H1 (cell line): ENCODE measurements at regions of chr3 and their contacts with region 1.

Region 1: GRCh38 chr3:149536429-149536828 is 61.9 kb downstream of the TM4SF4 start:
- DNase-seq: peak in 1 of 2 experiments; percentile 63
- H3K4me3 ChIP-seq: peak overlapping the region in 1 of 4 experiments; percentile 21; a peak in 1 of 8 replicates
- H3K27ac ChIP-seq: no peak overlapping the region
- H3K4me1 ChIP-seq: peaks cover 2 to 10% (median 6%) of the 10 kb centered on the region in 4 experiments; a peak in 5 of 7 replicates
- H3K27me3 ChIP-seq: no peaks in the 10 kb centered on the region
- CTCF ChIP-seq: no peak
- EP300 ChIP-seq: no peak
- POLR2A ChIP-seq: no peak
- RAD21 ChIP-seq: no peak

Region 2: GRCh38 chr3:149234671-149235245 is 301.7 kb before region 1 on chr3:
- CTCF ChIA-PET with region 1: no interaction called
- POLR2A ChIA-PET with region 1: no interaction called
- DNase-seq: no peak
- H3K4me3 ChIP-seq: no peak overlapping the region
- H3K27ac ChIP-seq: no peak overlapping the region
- H3K4me1 ChIP-seq: peaks cover 0 to 6% (median 4%) of the 10 kb centered on the region in 4 experiments; a peak in 4 of 7 replicates
- H3K27me3 ChIP-seq: 0 out of 7 replicates have a peak, but pooled peaks cover 0 to 2% (median 0%) of the 10 kb centered on the region in 4 experiments
- CTCF ChIP-seq: no peak
- EP300 ChIP-seq: no peak
- POLR2A ChIP-seq: no peak
- RAD21 ChIP-seq: no peak

Region 3: GRCh38 chr3:149442851-149443544 is 93.4 kb before region 1 on chr3:
- CTCF ChIA-PET with region 1: no interaction called
- POLR2A ChIA-PET with region 1: no interaction called
- DNase-seq: no peak
- H3K4me3 ChIP-seq: no peak overlapping the region
- H3K27ac ChIP-seq: no peak overlapping the region
- H3K4me1 ChIP-seq: no peaks in the 10 kb centered on the region
- H3K27me3 ChIP-seq: no peaks in the 10 kb centered on the region
- CTCF ChIP-seq: no peak
- EP300 ChIP-seq: no peak
- POLR2A ChIP-seq: no peak
- RAD21 ChIP-seq: no peak

Region 4: GRCh38 chr3:149512209-149512782 is 24.1 kb before region 1 on chr3:
- CTCF ChIA-PET with region 1: interaction called, 16 read pairs
- POLR2A ChIA-PET with region 1: no interaction called
- DNase-seq: peak in 1 of 2 experiments; percentile 72
- H3K4me3 ChIP-seq: peak overlapping the region in 1 of 4 experiments; percentile 34; a peak in 1 of 8 replicates
- H3K27ac ChIP-seq: no peak overlapping the region
- H3K4me1 ChIP-seq: no peaks in the 10 kb centered on the region
- H3K27me3 ChIP-seq: no peaks in the 10 kb centered on the region
- CTCF ChIP-seq: peak; percentile 81 to 92 (median 89)
- EP300 ChIP-seq: no peak
- POLR2A ChIP-seq: no peak
- RAD21 ChIP-seq: peak; percentile 92 to 93

Region 5: DNA sequence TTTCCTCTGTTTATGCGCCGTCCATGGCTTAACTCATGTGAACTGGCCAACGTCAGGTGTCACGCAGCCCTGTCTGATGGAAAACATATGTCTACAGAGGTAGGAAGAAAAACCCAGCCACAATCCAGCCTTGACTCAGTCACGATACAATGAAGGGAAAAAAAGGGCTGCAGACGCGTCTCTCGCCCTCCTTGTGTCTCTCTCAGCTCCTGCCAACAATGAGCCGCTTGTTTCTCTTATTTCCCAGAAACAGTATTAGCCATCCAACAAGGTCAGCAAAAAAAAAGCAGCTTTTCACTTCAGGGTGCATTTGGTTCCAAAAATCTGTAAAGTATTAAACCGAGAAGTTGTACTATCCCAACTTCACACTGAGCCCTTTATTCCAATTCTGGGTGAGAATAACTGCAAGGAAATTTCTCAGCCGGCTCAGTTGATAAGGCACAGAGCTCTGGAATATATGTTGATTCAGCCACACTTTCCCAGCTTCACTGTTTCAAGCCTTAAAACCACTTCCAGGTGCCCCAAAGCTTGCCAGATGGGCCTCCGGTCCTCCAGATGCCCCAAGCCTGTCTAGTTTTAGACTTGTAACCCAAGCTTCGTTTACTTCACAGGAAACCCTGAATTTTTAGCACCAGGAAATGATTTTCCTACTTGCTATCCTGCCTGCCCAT is 17.5 kb after region 1 on chr3:
- CTCF ChIA-PET with region 1: interaction called, 11 read pairs
- POLR2A ChIA-PET with region 1: no interaction called
- DNase-seq: no peak
- H3K4me3 ChIP-seq: no peak overlapping the region
- H3K27ac ChIP-seq: no peak overlapping the region
- H3K4me1 ChIP-seq: peaks cover 0 to 5% (median 1%) of the 10 kb centered on the region in 4 experiments; a peak in 5 of 7 replicates
- H3K27me3 ChIP-seq: no peaks in the 10 kb centered on the region
- CTCF ChIP-seq: no peak
- EP300 ChIP-seq: no peak
- POLR2A ChIP-seq: no peak
- RAD21 ChIP-seq: no peak

Region 6: GRCh38 chr3:149638228-149639092 is 102.0 kb after region 1 on chr3:
- CTCF ChIA-PET with region 1: interaction called, 11 read pairs
- POLR2A ChIA-PET with region 1: no interaction called
- DNase-seq: no peak
- H3K4me3 ChIP-seq: no peak overlapping the region
- H3K27ac ChIP-seq: no peak overlapping the region
- H3K4me1 ChIP-seq: peaks cover 0 to 6% (median 0%) of the 10 kb centered on the region in 4 experiments; a peak in 3 of 7 replicates
- H3K27me3 ChIP-seq: no peaks in the 10 kb centered on the region
- CTCF ChIP-seq: no peak
- EP300 ChIP-seq: no peak
- POLR2A ChIP-seq: no peak
- RAD21 ChIP-seq: no peak

Region 7: GRCh38 chr3:149702691-149703441 is 166.4 kb after region 1 on chr3:
- CTCF ChIA-PET with region 1: interaction called, 14 read pairs
- POLR2A ChIA-PET with region 1: no interaction called
- DNase-seq: no peak
- H3K4me3 ChIP-seq: no peak overlapping the region
- H3K27ac ChIP-seq: no peak overlapping the region
- H3K4me1 ChIP-seq: peaks cover 0 to 5% (median 2%) of the 10 kb centered on the region in 4 experiments; a peak in 3 of 7 replicates
- H3K27me3 ChIP-seq: no peaks in the 10 kb centered on the region
- CTCF ChIP-seq: no peak
- EP300 ChIP-seq: no peak
- POLR2A ChIP-seq: no peak
- RAD21 ChIP-seq: no peak

Region 8: DNA sequence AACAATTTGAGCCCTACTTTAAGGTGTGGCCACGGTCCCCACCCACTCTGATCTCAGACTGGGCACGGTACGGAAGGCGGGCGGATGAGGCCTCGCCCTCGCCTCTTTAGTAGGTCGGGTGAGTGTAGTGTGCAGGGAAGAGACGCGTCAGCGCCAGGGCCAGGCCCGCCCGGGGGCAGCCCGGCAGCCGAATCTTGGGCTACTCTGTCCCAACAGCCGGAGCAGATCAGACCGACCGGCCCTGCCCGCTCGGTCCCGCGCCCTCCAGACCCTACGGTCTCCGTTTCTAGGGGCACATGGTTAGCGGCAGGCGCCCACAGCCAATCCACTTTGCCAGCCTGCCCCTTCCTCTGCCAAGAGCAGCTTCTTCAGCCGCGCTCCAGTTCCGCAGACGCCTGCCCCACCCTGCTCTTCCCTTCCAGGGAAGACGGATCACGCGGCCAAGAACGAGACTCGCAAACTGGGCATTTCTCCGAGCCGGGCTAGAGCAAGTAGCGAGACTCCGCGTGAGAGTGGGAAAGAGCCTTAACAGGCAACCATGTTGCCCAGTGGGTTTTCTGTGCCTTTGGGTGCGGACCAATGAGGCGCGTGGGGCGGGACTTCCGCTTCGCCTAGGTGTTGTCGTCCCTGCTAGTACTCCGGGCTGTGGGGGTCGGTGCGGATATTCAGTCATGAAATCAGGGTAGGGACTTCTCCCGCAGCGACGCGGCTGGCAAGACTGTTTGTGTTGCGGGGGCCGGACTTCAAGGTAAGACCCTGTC is 276.4 kb after region 1 on chr3 and contains the start of gene RNF13:
- CTCF ChIA-PET with region 1: interaction called, 15 read pairs
- POLR2A ChIA-PET with region 1: no interaction called
- DNase-seq: peak; percentile 36 to 94
- H3K4me3 ChIP-seq: peak within 1 kb of the TSS; percentile 88 to 95 (median 91)
- H3K27ac ChIP-seq: peak within 1 kb of the TSS; percentile 89
- H3K4me1 ChIP-seq: peaks cover 0 to 7% (median 3%) of the 10 kb centered on the region in 4 experiments; a peak in 4 of 7 replicates
- H3K27me3 ChIP-seq: no peaks in the 10 kb centered on the region
- CTCF ChIP-seq: no peak
- EP300 ChIP-seq: no peak
- POLR2A ChIP-seq: peak; percentile 13 to 67
- RAD21 ChIP-seq: no peak
- total RNA-seq, gene RNF13: 35.4 and 37.1 TPM in 2 replicates